ENCODE measurements at regions of chr4 and their contacts with region 1.

Region 1: GRCh38 chr4:41882625-41883347 is 52.4 kb upstream of the TMEM33 start:
- DNase-seq: peak in 37 of 42 donors; percentile 19 to 79 (median 53)

Region 2: DNA sequence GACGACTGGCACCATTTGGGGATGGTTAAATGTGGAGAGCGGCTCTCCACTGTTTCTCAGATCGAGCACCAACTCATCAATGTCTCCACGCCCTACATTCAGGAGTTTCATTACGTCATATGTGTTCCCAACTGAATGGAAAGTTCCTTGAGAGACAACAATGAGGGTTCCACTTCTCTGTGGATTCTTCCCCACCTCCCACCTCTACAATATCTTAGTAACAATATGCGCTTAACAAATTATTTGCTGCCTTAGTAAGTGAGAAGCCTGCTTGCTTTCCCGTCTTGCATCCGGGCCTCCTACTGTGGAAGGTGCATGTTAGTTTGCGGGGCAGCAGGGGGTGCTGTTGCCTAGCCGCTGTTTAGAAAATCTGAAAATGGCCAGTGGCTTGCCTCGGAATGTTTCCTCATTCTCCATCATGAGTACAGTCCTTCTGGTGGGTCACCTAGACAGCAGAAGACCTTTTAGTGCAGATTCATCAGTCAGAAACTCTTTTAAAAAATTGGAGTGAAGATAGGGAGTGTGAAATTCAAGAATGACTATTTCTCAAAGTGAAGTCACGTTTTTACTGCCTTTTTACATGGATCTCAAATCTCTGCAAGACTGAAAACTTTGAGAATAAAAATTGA is 190.0 kb before region 1 on chr4:
- intact Hi-C with region 1: loop called (anchors 5 kb)
- DNase-seq: peak; percentile 35 to 86 (median 66)